ENCODE measurements at regions of chr2 and their contacts with region 1.

Region 1: GRCh38 chr2:5236249-5236648 is 455.9 kb upstream of the SOX11 start:
- DNase-seq: no peak
- ATAC-seq: no peak
- H3K4me3 ChIP-seq: no peak overlapping the region
- H3K4me3 Mint-ChIP-seq: no peak overlapping the region
- H3K27ac ChIP-seq: no peak overlapping the region
- H3K27ac Mint-ChIP-seq: no peak overlapping the region
- H3K4me1 ChIP-seq: no peaks in the 10 kb centered on the region
- H3K4me1 Mint-ChIP-seq: no peaks in the 10 kb centered on the region
- H3K27me3 ChIP-seq: no peaks in the 10 kb centered on the region
- H3K27me3 Mint-ChIP-seq: no peaks in the 10 kb centered on the region

Region 2: GRCh38 chr2:5976531-5977065 is 740.3 kb after region 1 on chr2:
- CTCF ChIA-PET with region 1: no interaction called
- POLR2A ChIA-PET with region 1: interaction called in 1 of 2 experiments, 11 read pairs
- DNase-seq: no peak
- ATAC-seq: no peak
- H3K4me3 ChIP-seq: no peak overlapping the region
- H3K4me3 Mint-ChIP-seq: no peak overlapping the region
- H3K27ac ChIP-seq: no peak overlapping the region
- H3K27ac Mint-ChIP-seq: no peak overlapping the region
- H3K4me1 ChIP-seq: no peaks in the 10 kb centered on the region
- H3K4me1 Mint-ChIP-seq: no peaks in the 10 kb centered on the region
- H3K27me3 ChIP-seq: peaks cover 0 to 12% of the 10 kb centered on the region in 2 experiments
- H3K27me3 Mint-ChIP-seq: no peaks in the 10 kb centered on the region

Measured in T-cell (primary cell).